Heart left ventricle (tissue), 16 donors: ENCODE measurements at regions of chr10 and their contacts with region 1.

Region 1: DNA sequence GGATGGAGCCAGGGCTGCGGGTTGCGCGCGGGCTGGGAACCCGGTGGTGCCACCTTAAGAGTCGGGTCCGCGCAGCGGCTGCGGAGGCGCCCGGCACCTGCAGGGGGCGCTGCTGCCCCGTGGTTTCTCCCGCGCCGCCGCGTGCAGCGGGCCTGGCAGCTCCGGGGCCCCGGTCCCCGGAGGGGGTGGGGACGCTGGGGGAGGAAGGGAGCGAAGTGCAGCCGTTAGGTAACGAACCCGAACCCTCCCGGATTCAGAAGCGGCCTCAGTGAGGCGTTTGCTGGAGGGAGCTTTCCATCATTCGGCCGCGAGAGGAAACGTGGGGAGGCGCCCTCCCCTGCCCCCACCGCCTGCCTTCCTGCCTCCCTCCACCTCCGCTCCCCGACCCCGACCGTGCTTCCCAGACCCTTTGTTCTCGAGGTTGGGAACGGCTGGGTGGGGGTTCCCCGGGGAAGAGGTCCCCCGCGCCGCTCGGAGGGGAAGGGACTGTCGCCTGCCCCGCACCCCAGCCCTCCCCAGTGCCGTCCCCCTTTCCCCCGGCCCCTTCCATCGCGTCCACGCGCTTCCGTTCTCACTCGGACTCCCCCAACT is 29.6 kb downstream of the SKIDA1 start:
- DNase-seq: peak; percentile 81 to 92 (median 86)
- ATAC-seq: peak; percentile 66 to 91 (median 82)
- H3K4me3 ChIP-seq: peak overlapping the region; percentile 61 to 86 (median 78)
- H3K27ac ChIP-seq: peak overlapping the region in 11 of 12 donors; percentile 68 to 91 (median 81)
- H3K4me1 ChIP-seq: peaks cover 0 to 31% (median 8%) of the 10 kb centered on the region in 12 donors
- H3K27me3 ChIP-seq: peaks cover 0 to 54% (median 0%) of the 10 kb centered on the region in 9 donors
- CTCF ChIP-seq: peak; percentile 96 to 100 (median 99)
- POLR2A ChIP-seq: no peak

Region 2: GRCh38 chr10:21083871-21084295 is 412.0 kb before region 1 on chr10:
- intact Hi-C with region 1: loop called in 5 of 10 experiments (anchors 10 kb)
- DNase-seq: no peak
- ATAC-seq: no peak
- H3K4me3 ChIP-seq: no peak overlapping the region
- H3K27ac ChIP-seq: no peak overlapping the region
- H3K4me1 ChIP-seq: peaks cover 0 to 2% (median 0%) of the 10 kb centered on the region in 12 donors
- H3K27me3 ChIP-seq: no peaks in the 10 kb centered on the region
- CTCF ChIP-seq: no peak
- POLR2A ChIP-seq: no peak

Region 3: GRCh38 chr10:21329995-21330627 is 165.7 kb before region 1 on chr10:
- intact Hi-C with region 1: loop called in 2 of 10 experiments (anchors 2 to 5 kb)
- DNase-seq: peak in 2 of 5 donors; percentile 25 to 38
- ATAC-seq: peak; percentile 59 to 76 (median 70)
- H3K4me3 ChIP-seq: no peak overlapping the region
- H3K27ac ChIP-seq: peak overlapping the region in 10 of 12 donors; percentile 35 to 75 (median 62)
- H3K4me1 ChIP-seq: peaks cover 0 to 22% (median 7%) of the 10 kb centered on the region in 12 donors
- H3K27me3 ChIP-seq: no peaks in the 10 kb centered on the region
- CTCF ChIP-seq: no peak
- POLR2A ChIP-seq: no peak

Region 4: DNA sequence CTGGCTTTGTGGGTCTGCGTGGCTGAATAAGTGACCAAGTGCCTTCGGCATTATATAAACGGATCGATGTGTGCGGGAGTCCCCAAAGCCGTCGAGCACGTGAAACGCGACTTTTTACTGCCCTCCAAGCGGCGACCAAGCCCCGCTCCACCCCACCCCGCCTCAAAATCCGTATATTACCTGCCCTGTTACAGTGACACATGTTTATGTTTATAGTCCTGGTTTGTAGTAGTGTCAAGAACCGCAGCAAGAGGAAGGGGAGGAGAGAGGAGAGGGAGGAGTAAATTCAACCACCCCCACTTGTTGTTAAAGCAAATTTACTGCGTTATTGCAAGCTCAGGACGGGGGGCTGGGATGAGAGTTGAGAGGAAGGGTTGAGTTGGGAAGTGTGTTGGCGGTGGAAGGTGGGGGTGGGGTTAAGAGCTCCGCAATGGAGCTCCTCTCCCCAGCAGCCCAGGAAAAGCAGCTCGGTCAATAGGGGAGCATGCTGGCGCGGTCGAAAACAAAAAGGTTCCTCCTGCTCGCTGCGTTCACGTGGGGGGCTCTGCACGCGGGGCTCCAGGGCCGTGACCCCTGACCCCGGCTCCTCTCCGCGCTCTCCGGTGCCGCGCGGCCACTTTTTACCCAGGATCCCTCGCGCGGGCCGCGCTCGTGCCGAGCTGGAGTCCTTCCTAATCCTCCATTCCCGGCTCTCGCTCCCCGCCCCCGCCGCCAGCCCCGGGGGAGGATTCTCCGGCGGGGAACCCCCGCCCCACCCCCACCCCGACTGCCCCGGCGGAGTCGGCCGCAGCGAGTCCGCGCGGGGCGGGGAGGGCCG is 29.7 kb after region 1 on chr10 and contains the start of gene SKIDA1:
- intact Hi-C with region 1: loop called in 4 of 10 experiments (anchors 2 to 5 kb)
- DNase-seq: peak; percentile 89 to 94 (median 92)
- ATAC-seq: peak; percentile 84 to 92 (median 88)
- H3K4me3 ChIP-seq: peak within 1 kb of the TSS; percentile 54 to 85 (median 71)
- H3K27ac ChIP-seq: peak within 1 kb of the TSS; percentile 95 to 99 (median 98)
- H3K4me1 ChIP-seq: peaks cover 0 to 25% (median 8%) of the 10 kb centered on the region in 12 donors
- H3K27me3 ChIP-seq: no peaks in the 10 kb centered on the region
- CTCF ChIP-seq: no peak
- POLR2A ChIP-seq: no peak
- total RNA-seq, gene SKIDA1: 2.3 to 5.4 (median 3.6) TPM

Region 5: GRCh38 chr10:21634599-21635365 is 138.9 kb after region 1 on chr10:
- intact Hi-C with region 1: no loop called
- DNase-seq: no peak
- ATAC-seq: no peak
- H3K4me3 ChIP-seq: no peak overlapping the region
- H3K27ac ChIP-seq: no peak overlapping the region
- H3K4me1 ChIP-seq: peaks cover 0 to 12% (median 0%) of the 10 kb centered on the region in 12 donors
- H3K27me3 ChIP-seq: no peaks in the 10 kb centered on the region
- CTCF ChIP-seq: no peak
- POLR2A ChIP-seq: no peak

Region 6: DNA sequence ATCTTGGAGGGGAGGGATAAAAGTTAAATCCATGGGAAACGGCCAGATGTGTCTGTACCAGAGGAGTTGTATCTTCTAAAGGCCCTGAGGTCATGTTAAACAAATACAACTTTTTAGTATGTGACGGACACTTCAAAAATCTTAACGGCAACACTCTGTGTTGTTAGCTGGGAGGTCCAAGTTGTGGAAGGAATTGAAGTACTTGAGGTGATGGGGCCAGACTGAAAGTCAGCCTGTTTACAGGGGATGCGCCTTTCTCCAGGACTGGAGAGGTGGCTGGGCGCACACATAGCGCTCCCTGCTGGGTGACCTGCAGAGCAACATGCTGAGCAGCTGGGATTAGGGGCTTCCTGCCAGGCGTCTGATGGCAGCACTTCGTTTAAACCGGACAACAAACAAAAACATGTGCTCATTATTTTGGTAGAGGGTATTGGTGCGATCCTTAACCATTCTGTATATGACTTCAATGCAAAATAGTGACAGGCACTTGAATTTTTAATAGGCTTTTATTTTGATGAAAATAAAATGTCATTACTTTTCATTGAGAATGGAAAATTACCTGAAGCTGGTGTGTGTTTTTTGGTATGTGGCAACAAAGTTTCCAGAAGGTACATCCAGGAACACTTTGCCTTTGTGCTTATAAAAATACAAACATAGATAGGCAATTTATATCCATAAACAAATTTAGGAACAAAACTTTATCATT is 236.4 kb after region 1 on chr10:
- intact Hi-C with region 1: loop called (anchors 1 to 5 kb)
- DNase-seq: peak; percentile 59 to 79 (median 64)
- ATAC-seq: peak; percentile 87 to 96 (median 94)
- H3K4me3 ChIP-seq: no peak overlapping the region
- H3K27ac ChIP-seq: no peak overlapping the region
- H3K4me1 ChIP-seq: peaks cover 0 to 10% (median 4%) of the 10 kb centered on the region in 12 donors
- H3K27me3 ChIP-seq: no peaks in the 10 kb centered on the region
- CTCF ChIP-seq: peak; percentile 77 to 94 (median 88)
- POLR2A ChIP-seq: no peak

Region 7: GRCh38 chr10:22988581-22989360 is 1492.9 kb after region 1 on chr10:
- intact Hi-C with region 1: loop called in 3 of 10 experiments (anchors 5 kb)
- DNase-seq: peak in 3 of 5 donors; percentile 30 to 55 (median 43)
- ATAC-seq: peak in 3 of 4 donors; percentile 79 to 86 (median 83)
- H3K4me3 ChIP-seq: peak overlapping the region in 1 of 12 donors; percentile 25
- H3K27ac ChIP-seq: no peak overlapping the region
- H3K4me1 ChIP-seq: peaks cover 0 to 10% (median 0%) of the 10 kb centered on the region in 12 donors
- H3K27me3 ChIP-seq: peaks cover 0 to 11% (median 0%) of the 10 kb centered on the region in 9 donors
- CTCF ChIP-seq: peak; percentile 83 to 97 (median 92)
- POLR2A ChIP-seq: no peak